ENCODE measurements at regions of chr16 and their contacts with region 1.

Region 1: DNA sequence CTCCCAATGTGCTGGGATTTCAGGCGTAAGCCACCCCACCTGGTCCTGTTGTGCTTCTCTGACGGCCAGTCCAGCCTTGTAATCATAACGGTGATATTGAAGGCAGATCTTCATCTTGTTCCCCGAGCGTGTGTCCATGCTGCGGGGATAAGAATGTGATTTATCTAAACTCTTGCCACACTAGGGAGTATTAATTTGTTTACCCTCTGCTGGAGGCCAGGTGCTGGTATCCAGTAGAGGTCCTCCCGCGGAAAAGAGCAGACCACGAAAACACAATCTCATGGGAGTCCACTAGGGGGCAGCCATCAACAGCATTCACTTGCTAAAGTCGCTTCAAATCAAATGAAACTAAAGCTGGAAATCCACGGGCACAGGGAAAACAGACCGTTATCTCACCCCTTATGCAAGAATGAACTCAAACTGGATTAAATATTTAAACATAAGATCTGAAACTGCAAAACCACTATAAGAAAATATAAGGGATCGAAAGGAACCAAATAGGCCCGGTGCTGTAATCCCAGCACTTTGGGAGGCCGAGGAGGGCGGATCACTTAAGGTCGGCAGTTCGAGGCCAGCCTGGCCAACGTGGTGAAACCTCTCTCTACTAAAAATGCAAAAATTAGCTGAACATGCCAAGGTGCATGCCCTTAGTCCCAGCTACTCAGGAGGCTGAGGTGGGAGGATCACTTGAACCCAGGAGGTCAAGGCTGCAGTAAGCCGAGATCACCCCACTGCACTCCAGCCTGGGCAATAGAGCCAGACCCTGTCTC is 22.3 kb upstream of the RBBP6 start:
- DNase-seq: peak; percentile 80 to 85
- H3K4me3 ChIP-seq: no peak overlapping the region
- H3K4me3 Mint-ChIP-seq: no peak overlapping the region
- H3K27ac Mint-ChIP-seq: no peak overlapping the region
- H3K4me1 ChIP-seq: no peaks in the 10 kb centered on the region
- H3K4me1 Mint-ChIP-seq: peaks cover 4% of the 10 kb centered on the region
- H3K27me3 ChIP-seq: no peaks in the 10 kb centered on the region
- H3K27me3 Mint-ChIP-seq: no peaks in the 10 kb centered on the region
- CTCF ChIP-seq: peak; percentile 89 to 91

Region 2: DNA sequence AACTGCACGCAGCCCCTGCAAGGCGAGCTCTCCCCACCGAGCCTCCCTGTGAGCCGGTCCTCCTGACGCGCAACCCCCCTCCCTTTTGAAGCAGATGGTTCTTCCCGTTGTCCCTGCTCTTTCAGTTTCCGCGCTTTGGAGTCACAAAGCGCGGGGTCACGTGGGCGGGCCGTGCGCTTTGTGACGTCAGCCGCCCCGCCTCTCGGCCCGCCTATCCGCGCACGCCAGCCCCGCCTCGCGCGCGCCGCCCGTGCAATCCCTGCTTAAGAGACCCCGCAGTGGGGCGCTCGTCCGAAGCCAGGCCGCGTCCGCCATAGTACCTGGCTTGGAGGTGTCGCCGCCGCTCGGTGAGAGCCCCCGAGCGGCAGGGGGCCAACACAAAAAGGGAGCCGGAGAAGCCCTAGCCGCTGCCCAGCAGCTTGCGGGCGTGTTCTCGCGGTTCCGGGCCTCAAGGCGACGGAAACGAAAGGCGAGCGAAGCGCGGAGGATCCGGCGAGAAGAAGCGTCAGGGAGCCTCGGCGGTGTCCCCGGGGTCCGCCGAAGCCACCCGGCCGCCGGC is 22.3 kb after region 1 on chr16 and contains the start of gene RBBP6:
- CTCF ChIA-PET with region 1: interaction called, 5 read pairs
- POLR2A ChIA-PET with region 1: no interaction called
- intact Hi-C with region 1: loop called (anchors 1 kb)
- DNase-seq: peak; percentile 90 to 95
- H3K4me3 ChIP-seq: peak within 1 kb of the TSS; percentile 94
- H3K4me3 Mint-ChIP-seq: peak within 1 kb of the TSS; percentile 98
- H3K27ac Mint-ChIP-seq: peak within 1 kb of the TSS; percentile 100
- H3K4me1 ChIP-seq: peaks cover 6% of the 10 kb centered on the region; the same call in 1 of the 2 replicates
- H3K4me1 Mint-ChIP-seq: peaks cover 8% of the 10 kb centered on the region
- H3K27me3 ChIP-seq: no peaks in the 10 kb centered on the region
- H3K27me3 Mint-ChIP-seq: no peaks in the 10 kb centered on the region
- CTCF ChIP-seq: peak in 1 of 2 experiments; percentile 25
- total RNA-seq, gene RBBP6: 38.7 and 42.2 TPM in 2 replicates

Region 3: GRCh38 chr16:24568392-24568791 is 51.3 kb after region 1 on chr16:
- CTCF ChIA-PET with region 1: no interaction called
- POLR2A ChIA-PET with region 1: no interaction called
- intact Hi-C with region 1: no loop called
- DNase-seq: no peak
- H3K4me3 ChIP-seq: no peak overlapping the region
- H3K4me3 Mint-ChIP-seq: no peak overlapping the region
- H3K27ac Mint-ChIP-seq: no peak overlapping the region
- H3K4me1 ChIP-seq: no peaks in the 10 kb centered on the region
- H3K4me1 Mint-ChIP-seq: no peaks in the 10 kb centered on the region
- H3K27me3 ChIP-seq: no peaks in the 10 kb centered on the region
- H3K27me3 Mint-ChIP-seq: no peaks in the 10 kb centered on the region
- CTCF ChIP-seq: no peak

Region 4: GRCh38 chr16:24626256-24626655 is 109.2 kb after region 1 on chr16:
- CTCF ChIA-PET with region 1: no interaction called
- POLR2A ChIA-PET with region 1: no interaction called
- intact Hi-C with region 1: no loop called
- DNase-seq: no peak
- H3K4me3 ChIP-seq: no peak overlapping the region
- H3K4me3 Mint-ChIP-seq: no peak overlapping the region
- H3K27ac Mint-ChIP-seq: no peak overlapping the region
- H3K4me1 ChIP-seq: no peaks in the 10 kb centered on the region
- H3K4me1 Mint-ChIP-seq: no peaks in the 10 kb centered on the region
- H3K27me3 ChIP-seq: no peaks in the 10 kb centered on the region
- H3K27me3 Mint-ChIP-seq: peaks cover 6% of the 10 kb centered on the region
- CTCF ChIP-seq: no peak

Region 5: DNA sequence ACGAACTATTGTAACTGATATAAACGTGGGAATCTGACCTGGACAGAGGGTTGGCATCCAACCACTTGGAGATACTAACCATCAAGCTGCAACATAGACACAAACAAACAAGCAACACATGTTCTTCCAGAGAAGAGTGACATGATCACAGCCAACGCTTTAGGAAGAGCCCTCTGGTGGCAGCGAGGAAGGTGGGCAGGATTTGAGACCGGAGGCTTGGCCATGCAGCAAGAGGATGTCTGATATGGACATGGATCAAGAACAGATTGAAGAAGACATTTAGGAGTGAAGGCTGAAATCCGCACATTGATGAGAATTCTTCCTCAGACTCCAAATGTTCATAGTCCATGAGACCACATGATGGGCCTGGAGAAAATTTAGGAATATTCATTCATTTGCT is 172.1 kb after region 1 on chr16:
- CTCF ChIA-PET with region 1: interaction called, 5 read pairs
- POLR2A ChIA-PET with region 1: no interaction called
- intact Hi-C with region 1: loop called (anchors 1 kb)
- DNase-seq: peak in 1 of 2 experiments; percentile 35
- H3K4me3 ChIP-seq: no peak overlapping the region
- H3K4me3 Mint-ChIP-seq: no peak overlapping the region
- H3K27ac Mint-ChIP-seq: no peak overlapping the region
- H3K4me1 ChIP-seq: peaks cover 9% of the 10 kb centered on the region; the same call in 1 of the 2 replicates
- H3K4me1 Mint-ChIP-seq: peaks cover 10% of the 10 kb centered on the region
- H3K27me3 ChIP-seq: no peaks in the 10 kb centered on the region
- H3K27me3 Mint-ChIP-seq: no peaks in the 10 kb centered on the region
- CTCF ChIP-seq: peak; percentile 46 to 58

Region 6: DNA sequence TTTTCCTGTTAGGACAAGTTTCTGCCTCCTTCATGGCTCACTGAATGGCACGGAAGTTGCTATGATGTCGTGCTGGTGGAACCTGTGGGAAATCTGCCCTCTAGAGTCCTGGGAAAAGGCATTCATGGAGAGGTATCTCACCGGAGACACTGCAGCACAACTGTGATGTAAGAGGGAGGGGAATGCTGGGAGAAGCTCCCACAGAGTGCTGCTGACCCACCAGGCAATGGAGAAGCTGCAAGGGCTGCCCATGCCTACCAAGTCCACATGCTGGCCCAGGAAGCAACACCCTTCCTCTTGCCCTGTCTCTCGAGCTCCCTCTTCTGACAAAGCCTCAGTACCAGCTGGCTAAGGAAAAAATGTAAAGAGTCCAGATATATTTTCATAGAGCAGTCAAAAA is 283.5 kb after region 1 on chr16:
- CTCF ChIA-PET with region 1: no interaction called
- POLR2A ChIA-PET with region 1: no interaction called
- intact Hi-C with region 1: loop called (anchors 5 kb)
- DNase-seq: peak; percentile 19 to 46
- H3K4me3 ChIP-seq: no peak overlapping the region
- H3K4me3 Mint-ChIP-seq: peak overlapping the region; percentile 14
- H3K27ac Mint-ChIP-seq: peak overlapping the region; percentile 37
- H3K4me1 ChIP-seq: peaks cover 6% of the 10 kb centered on the region; the same call in 1 of the 2 replicates
- H3K4me1 Mint-ChIP-seq: peaks cover 30% of the 10 kb centered on the region
- H3K27me3 ChIP-seq: no peaks in the 10 kb centered on the region
- H3K27me3 Mint-ChIP-seq: no peaks in the 10 kb centered on the region
- CTCF ChIP-seq: peak in 1 of 2 experiments; percentile 18

Measured in Caco-2 (cell line).